ENCODE measurements at regions of chr3 and their contacts with region 1.

Region 1: GRCh38 chr3:116388867-116389385 is 56.4 kb downstream of the LSAMP start:
- DNase-seq: no peak

Region 2: GRCh38 chr3:116216761-116217160 is 172.2 kb before region 1 on chr3:
- intact Hi-C with region 1: loop called (anchors 5 kb)
- DNase-seq: no peak